ENCODE measurements at regions of chr11 and their contacts with region 1.

Region 1: DNA sequence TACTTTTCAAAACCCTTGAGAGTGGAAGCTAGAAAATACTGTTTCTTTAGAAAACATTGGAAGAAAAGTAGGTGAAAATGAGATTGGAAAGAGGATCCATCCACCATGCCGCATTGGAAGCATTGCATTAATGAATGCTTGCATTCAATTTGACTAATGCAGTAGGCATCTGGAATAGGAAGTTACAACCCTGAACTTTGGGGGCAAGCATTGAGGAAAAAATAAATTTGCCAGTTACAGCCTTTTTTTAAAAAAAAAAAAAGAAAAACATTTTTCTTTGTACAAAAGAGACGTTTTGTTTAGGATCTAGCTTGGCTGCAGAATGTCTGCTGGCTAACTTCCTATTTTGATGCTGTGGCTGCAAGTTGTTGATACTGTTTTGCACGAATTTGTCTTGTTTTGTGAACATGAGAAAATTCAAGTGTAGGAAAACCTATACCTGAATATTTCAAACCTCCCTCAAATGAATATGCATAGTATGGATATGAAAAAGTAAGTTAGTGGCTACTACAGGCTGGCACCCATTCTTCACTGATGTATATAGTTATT is 28.1 kb downstream of the RTN3 start:
- DNase-seq: peak in 2 of 3 donors; percentile 41 to 50
- H3K4me3 ChIP-seq: peak overlapping the region in 1 of 7 experiments; percentile 33
- H3K27ac ChIP-seq: no peak overlapping the region
- H3K4me1 ChIP-seq: peaks cover 2 to 21% (median 9%) of the 10 kb centered on the region in 4 experiments
- H3K27me3 ChIP-seq: no peaks in the 10 kb centered on the region

Region 2: GRCh38 chr11:63698976-63699733 is 10.3 kb before region 1 on chr11:
- CTCF ChIA-PET with region 1: interaction called, 11 read pairs
- POLR2A ChIA-PET with region 1: no interaction called
- DNase-seq: no peak
- H3K4me3 ChIP-seq: no peak overlapping the region
- H3K27ac ChIP-seq: no peak overlapping the region
- H3K4me1 ChIP-seq: peaks cover 0 to 5% (median 2%) of the 10 kb centered on the region in 4 experiments
- H3K27me3 ChIP-seq: no peaks in the 10 kb centered on the region